Mammary epithelial cell (primary cell): ENCODE measurements at regions of chr13 and their contacts with region 1.

Region 1: DNA sequence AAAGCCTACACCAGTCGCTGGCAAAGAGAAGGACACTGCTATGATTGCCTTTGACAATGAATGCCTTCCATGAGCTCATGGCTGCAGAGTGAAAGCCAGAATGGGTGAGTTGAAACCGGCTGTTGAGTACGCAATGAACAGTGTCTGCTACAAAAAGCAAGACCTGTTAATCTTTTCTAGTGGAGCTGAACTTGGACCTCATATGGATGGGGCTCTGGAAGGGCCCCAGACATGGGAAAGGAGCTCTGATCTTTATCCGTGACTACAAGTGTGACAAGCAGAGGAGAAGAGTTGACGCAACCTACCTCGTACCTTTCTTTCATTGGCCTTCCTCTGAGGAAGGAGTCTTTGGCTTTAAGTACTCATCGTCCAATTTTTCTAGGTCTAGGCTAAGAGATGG is 67.1 kb upstream of the TSC22D1 start:
- DNase-seq: no peak
- H3K4me3 ChIP-seq: no peak overlapping the region
- H3K27ac ChIP-seq: no peak overlapping the region
- H3K4me1 ChIP-seq: no peaks in the 10 kb centered on the region
- H3K27me3 ChIP-seq: no peaks in the 10 kb centered on the region
- CTCF ChIP-seq: no peak

Region 2: GRCh38 chr13:43981091-43981490 is 662.2 kb before region 1 on chr13:
- CTCF ChIA-PET with region 1: no interaction called
- dilution Hi-C with region 1: no loop called
- in situ Hi-C with region 1: no loop called
- intact Hi-C with region 1: no loop called
- DNase-seq: no peak
- H3K4me3 ChIP-seq: no peak overlapping the region
- H3K27ac ChIP-seq: no peak overlapping the region
- H3K4me1 ChIP-seq: no peaks in the 10 kb centered on the region
- H3K27me3 ChIP-seq: no peaks in the 10 kb centered on the region
- CTCF ChIP-seq: no peak

Region 3: GRCh38 chr13:44093607-44094564 is 549.4 kb before region 1 on chr13:
- CTCF ChIA-PET with region 1: no interaction called
- dilution Hi-C with region 1: no loop called
- in situ Hi-C with region 1: no loop called
- intact Hi-C with region 1: no loop called
- DNase-seq: no peak
- H3K4me3 ChIP-seq: no peak overlapping the region
- H3K27ac ChIP-seq: no peak overlapping the region
- H3K4me1 ChIP-seq: peaks cover 4% of the 10 kb centered on the region
- H3K27me3 ChIP-seq: no peaks in the 10 kb centered on the region
- CTCF ChIP-seq: no peak

Region 4: GRCh38 chr13:44565881-44566280 is 77.4 kb before region 1 on chr13:
- CTCF ChIA-PET with region 1: no interaction called
- dilution Hi-C with region 1: no loop called
- in situ Hi-C with region 1: no loop called
- intact Hi-C with region 1: no loop called
- DNase-seq: no peak
- H3K4me3 ChIP-seq: no peak overlapping the region
- H3K27ac ChIP-seq: no peak overlapping the region
- H3K4me1 ChIP-seq: no peaks in the 10 kb centered on the region
- H3K27me3 ChIP-seq: no peaks in the 10 kb centered on the region
- CTCF ChIP-seq: no peak

Region 5: GRCh38 chr13:44629465-44630183 is 13.6 kb before region 1 on chr13:
- CTCF ChIA-PET with region 1: interaction called, 10 read pairs
- dilution Hi-C with region 1: no loop called
- in situ Hi-C with region 1: no loop called
- intact Hi-C with region 1: no loop called
- DNase-seq: no peak
- H3K4me3 ChIP-seq: no peak overlapping the region
- H3K27ac ChIP-seq: no peak overlapping the region
- H3K4me1 ChIP-seq: no peaks in the 10 kb centered on the region
- H3K27me3 ChIP-seq: no peaks in the 10 kb centered on the region
- CTCF ChIP-seq: no peak